Dorsolateral prefrontal cortex (tissue), 120 donors: ENCODE measurements at regions of chr11 and their contacts with region 1.

Region 1: GRCh38 chr11:119368121-119369034 is 13.1 kb downstream of the USP2 start:
- DNase-seq: peak in 2 of 10 donors; percentile 50 to 59
- H3K4me3 ChIP-seq: peak overlapping the region in 52 of 59 donors; percentile 2 to 55 (median 32)
- H3K27ac ChIP-seq: peak overlapping the region; percentile 26 to 99 (median 92)
- H3K27me3 ChIP-seq: no peaks in the 10 kb centered on the region
- CTCF ChIP-seq: no peak

Region 2: GRCh38 chr11:119421941-119422808 is 53.8 kb after region 1 on chr11:
- intact Hi-C with region 1: loop called in 1 of 2 experiments (anchors 5 kb)
- DNase-seq: peak in 8 of 10 donors; percentile 46 to 72 (median 59)
- H3K4me3 ChIP-seq: peak overlapping the region; percentile 43 to 86 (median 71)
- H3K27ac ChIP-seq: peak overlapping the region in 58 of 59 donors; percentile 25 to 97 (median 89)
- H3K27me3 ChIP-seq: peaks cover 0 to 17% (median 0%) of the 10 kb centered on the region in 45 donors
- CTCF ChIP-seq: peak in 2 of 56 donors; percentile 6 to 20